OCI-LY7 (cell line): ENCODE measurements at regions of chr19 and their contacts with region 1.

Region 1: GRCh38 chr19:16897154-16897855 is 8.5 kb downstream of the F2RL3 start:
- DNase-seq: peak; percentile 83
- H3K4me3 ChIP-seq: peak overlapping the region; percentile 75
- H3K27ac ChIP-seq: no peak overlapping the region
- H3K4me1 ChIP-seq: peaks cover 32% of the 10 kb centered on the region
- CTCF ChIP-seq: no peak

Region 2: GRCh38 chr19:16771618-16772017 is 125.7 kb before region 1 on chr19:
- CTCF ChIA-PET with region 1: no interaction called
- POLR2A ChIA-PET with region 1: no interaction called
- intact Hi-C with region 1: loop called (anchors 2 kb)
- DNase-seq: peak; percentile 80
- H3K4me3 ChIP-seq: no peak overlapping the region
- H3K27ac ChIP-seq: no peak overlapping the region
- H3K4me1 ChIP-seq: no peaks in the 10 kb centered on the region
- CTCF ChIP-seq: peak; percentile 88

Region 3: DNA sequence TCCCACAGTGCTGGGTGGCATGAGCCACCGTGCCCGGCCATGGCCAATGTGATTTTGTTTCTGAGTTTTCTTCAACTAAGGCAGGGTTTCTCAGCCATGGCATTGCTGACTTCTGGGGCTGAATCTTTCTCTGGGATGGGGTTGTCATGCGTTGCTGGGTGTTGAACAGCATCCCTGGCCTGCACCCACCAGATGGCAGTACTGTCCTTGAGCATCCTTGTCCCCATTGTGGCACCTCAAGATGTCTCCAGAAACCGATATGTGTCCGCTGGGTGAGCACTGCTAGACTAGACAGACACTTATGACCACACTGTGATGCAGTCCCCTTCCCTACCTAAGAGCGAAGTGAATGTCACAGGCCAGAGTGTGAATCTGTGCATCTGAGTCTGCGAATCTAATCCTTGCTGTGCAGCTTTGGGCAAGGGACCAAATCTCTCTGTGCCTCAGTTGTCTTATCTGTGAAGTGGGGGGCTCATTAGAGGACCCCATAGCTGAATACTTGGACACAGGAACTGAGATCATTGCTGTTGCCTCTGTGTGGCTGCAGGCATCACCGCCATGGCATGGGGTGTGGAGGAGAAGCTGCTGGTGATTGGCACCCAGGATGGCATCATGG is 118.4 kb before region 1 on chr19:
- CTCF ChIA-PET with region 1: no interaction called
- POLR2A ChIA-PET with region 1: no interaction called
- intact Hi-C with region 1: loop called (anchors 1 kb)
- DNase-seq: peak; percentile 78
- H3K4me3 ChIP-seq: no peak overlapping the region
- H3K27ac ChIP-seq: no peak overlapping the region
- H3K4me1 ChIP-seq: no peaks in the 10 kb centered on the region
- CTCF ChIP-seq: peak; percentile 85

Region 4: DNA sequence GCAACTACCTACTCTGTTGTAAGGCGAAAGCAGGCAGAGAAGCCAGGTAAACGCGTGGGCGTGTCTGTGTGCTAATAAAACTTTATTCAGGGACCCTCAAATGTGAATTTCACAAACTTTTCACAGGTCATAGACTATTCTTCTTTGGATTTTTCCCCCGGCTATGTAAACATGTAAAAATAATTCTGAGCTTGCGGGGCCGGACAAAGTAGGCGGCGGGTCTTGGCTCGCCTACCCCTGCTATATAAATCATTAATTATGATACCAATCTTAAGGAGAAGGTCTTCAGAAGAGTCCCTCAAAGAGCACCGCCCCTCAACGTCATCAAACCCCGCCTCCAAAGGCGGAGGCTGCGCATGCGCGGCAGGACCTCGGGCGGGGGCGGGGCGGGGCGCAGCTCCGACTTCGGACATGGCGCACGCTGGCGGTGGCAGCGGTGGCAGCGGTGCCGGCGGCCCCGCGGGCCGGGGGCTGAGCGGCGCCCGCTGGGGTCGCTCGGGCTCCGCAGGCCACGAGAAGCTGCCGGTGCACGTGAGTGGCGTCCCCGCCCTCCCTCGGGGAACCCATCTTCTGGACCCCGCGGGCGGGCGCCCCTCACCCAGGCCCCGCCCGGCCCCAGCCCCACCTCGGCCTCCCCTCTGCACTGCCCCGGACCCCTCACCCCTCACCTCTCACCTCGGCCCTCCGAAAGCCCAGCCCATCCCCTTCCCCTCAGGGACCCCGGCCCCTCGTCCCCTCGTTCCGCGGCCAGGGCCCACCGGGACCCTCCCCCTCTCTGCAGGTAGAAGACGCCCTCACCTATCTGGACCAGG is 68.1 kb before region 1 on chr19 and contains the start of gene SIN3B:
- CTCF ChIA-PET with region 1: no interaction called
- POLR2A ChIA-PET with region 1: no interaction called
- intact Hi-C with region 1: loop called (anchors 5 kb)
- DNase-seq: peak; percentile 92
- H3K4me3 ChIP-seq: peak within 1 kb of the TSS; percentile 89
- H3K27ac ChIP-seq: no peak within 1 kb of the TSS
- H3K4me1 ChIP-seq: peaks cover 18% of the 10 kb centered on the region
- CTCF ChIP-seq: no peak
- total RNA-seq, gene SIN3B: 19.4 and 21.4 TPM in 2 replicates

Region 5: GRCh38 chr19:16910750-16911445 is 13.6 kb after region 1 on chr19:
- CTCF ChIA-PET with region 1: no interaction called
- POLR2A ChIA-PET with region 1: no interaction called
- intact Hi-C with region 1: no loop called
- DNase-seq: no peak
- H3K4me3 ChIP-seq: no peak overlapping the region
- H3K27ac ChIP-seq: no peak overlapping the region
- H3K4me1 ChIP-seq: no peaks in the 10 kb centered on the region
- CTCF ChIP-seq: 0 out of 2 replicates have a peak, but pooled peaks have one; percentile 12

Region 6: DNA sequence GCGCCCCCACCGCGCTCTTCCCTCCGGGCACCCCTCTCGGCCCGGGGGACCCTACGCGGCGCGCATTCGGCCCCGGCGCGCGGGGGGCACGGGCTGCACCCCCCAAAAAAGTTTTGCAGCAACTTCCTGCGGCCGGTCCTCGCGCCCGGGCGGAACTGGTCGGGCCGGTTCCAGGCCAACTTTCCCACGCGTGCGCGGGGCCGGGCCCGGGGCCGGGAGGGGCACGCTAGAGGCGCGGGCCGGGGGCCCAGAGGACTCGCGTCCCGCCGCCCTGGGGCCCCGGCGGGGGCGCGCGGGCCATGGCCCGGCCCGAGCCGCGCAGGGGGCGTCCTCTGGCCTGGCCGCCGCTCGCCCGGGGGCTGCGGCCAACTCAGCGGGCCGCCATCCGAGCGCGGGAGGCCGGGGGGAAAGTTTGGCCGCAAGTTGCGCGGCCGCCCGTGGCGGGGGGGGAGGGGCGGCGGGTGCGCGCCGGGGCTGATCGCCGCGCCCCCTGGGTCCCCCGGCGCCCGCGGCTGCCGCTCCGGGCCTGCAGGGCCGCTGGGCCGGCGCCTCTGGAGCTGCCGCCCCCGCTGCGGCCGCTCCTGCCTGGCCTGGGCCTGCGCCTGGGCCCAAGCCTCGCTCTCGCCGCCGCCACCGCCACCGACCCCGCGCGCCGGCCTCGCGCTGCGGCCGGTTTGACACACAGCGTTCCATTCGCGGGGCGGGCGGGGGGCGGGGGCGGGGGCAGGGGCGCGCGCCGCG is 348.1 kb after region 1 on chr19 and contains the start of gene NR2F6:
- CTCF ChIA-PET with region 1: no interaction called
- POLR2A ChIA-PET with region 1: no interaction called
- intact Hi-C with region 1: loop called (anchors 10 kb)
- DNase-seq: no peak
- H3K4me3 ChIP-seq: peak within 1 kb of the TSS; percentile 74
- H3K27ac ChIP-seq: peak within 1 kb of the TSS; percentile 69
- H3K4me1 ChIP-seq: peaks cover 43% of the 10 kb centered on the region
- CTCF ChIP-seq: no peak
- total RNA-seq, gene NR2F6: 31.0 and 39.2 TPM in 2 replicates